ENCODE measurements at regions of chr11 and their contacts with region 1.

Region 1: DNA sequence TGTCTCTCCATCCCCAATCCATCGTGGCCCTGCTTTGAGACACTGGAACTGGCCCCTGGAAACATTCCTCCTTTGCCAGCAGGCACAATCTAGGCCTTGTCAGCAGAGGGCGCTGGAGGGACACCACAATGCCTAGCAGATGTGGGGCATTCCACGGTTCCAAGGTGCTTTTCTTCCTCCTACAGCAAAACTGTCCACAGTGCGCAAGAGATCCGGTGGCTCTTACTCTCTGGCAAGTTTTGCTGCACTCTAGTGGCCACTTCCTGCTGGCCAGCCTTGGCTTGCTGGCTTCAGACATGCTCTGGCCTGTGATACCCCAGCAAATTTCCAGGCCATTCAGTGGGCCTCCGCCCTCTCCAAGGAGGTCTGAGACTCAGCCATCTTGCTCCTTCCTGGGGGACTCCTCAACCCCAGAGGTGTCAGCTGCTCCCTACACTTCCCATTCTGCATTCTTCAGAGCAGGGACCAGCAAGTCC is 17.1 kb upstream of the RBM4B start:
- DNase-seq: peak; percentile 82
- H3K4me3 Mint-ChIP-seq: no peak overlapping the region
- H3K27ac Mint-ChIP-seq: no peak overlapping the region
- H3K4me1 Mint-ChIP-seq: no peaks in the 10 kb centered on the region
- H3K27me3 Mint-ChIP-seq: no peaks in the 10 kb centered on the region

Region 2: GRCh38 chr11:66674964-66675602 is 19.7 kb before region 1 on chr11:
- CTCF ChIA-PET with region 1: no interaction called
- POLR2A ChIA-PET with region 1: no interaction called
- DNase-seq: no peak
- H3K4me3 Mint-ChIP-seq: no peak overlapping the region
- H3K27ac Mint-ChIP-seq: no peak overlapping the region
- H3K4me1 Mint-ChIP-seq: peaks cover 37% of the 10 kb centered on the region
- H3K27me3 Mint-ChIP-seq: no peaks in the 10 kb centered on the region

Region 3: DNA sequence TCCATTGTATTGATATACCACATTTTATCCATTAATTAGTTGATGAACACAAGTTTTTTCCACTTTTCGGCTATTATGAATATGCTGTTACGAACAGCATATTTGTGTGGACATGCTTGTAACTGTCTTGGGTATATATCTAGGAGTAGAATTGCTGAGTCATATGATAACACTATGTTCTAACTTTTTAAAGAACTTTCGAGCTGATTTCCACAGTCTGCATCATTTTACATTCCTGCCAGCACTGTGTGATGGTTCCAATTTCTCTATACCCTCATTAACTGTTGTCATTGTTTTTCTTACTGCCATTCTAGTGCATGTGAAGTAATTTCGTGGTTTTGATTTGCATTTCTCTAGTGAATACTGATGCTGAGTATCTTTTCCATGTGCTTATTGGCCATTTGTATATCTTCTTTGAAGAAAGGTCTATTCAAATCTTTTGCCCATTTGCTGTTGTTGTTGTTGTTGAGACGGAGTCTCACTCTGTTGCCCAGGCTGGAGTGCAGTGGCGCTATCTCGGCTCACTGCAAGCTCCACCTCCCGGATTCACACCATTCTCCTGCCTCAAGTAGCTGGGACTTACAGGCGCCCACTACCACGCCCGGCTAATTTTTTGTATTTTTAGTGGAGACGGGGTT is 141.1 kb after region 1 on chr11:
- CTCF ChIA-PET with region 1: interaction called, 68 read pairs
- POLR2A ChIA-PET with region 1: interaction called, 3 read pairs
- DNase-seq: no peak
- H3K4me3 Mint-ChIP-seq: no peak overlapping the region
- H3K27ac Mint-ChIP-seq: no peak overlapping the region
- H3K4me1 Mint-ChIP-seq: peaks cover 24% of the 10 kb centered on the region
- H3K27me3 Mint-ChIP-seq: no peaks in the 10 kb centered on the region